PC-9 (cell line): ENCODE measurements at regions of chr6 and their contacts with region 1.

Region 1: DNA sequence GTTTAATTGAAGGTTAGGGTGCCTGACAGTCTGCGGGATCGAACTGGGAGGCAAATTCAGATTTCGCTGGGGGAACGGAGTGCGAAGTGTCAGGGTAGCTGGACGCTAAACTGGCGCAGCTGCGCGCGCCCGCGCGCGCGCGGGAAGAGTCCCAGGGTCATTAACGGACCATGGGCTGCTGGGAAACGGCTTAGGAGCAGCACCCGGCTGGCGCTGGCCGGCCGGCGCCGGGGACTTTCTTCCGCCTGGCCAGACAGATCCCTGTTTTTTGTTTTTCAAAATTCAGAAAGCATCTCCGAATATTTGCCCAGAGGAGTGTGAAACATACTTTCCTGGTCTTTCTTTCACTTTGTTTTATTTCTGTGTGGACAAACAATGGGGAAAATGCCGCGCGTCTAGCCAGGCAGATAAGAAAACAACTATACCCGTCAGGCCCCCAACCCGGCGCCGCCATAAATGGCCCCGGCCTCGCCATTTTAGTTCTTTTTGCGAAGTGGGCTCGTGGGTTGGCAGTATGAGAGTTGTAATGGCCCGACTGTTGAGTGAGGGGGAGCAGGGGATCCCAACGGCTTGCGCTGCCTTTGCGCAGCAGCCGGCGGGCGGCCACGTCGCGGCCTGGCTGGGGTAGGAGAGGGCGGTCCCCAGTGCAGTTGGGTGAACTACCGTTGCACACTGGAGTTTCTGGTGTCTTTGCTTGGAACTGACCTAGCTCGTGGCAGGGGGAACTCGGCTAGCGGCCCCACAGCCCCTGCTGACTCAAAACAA is 7.1 kb downstream of the HSPA1B start:
- DNase-seq: peak; percentile 71 to 80
- H3K4me3 ChIP-seq: peak overlapping the region; percentile 94
- H3K27ac ChIP-seq: peak overlapping the region; percentile 77
- H3K4me1 ChIP-seq: peaks cover 38% of the 10 kb centered on the region
- H3K27me3 ChIP-seq: no peaks in the 10 kb centered on the region
- CTCF ChIP-seq: no peak

Region 2: GRCh38 chr6:31007694-31008093 is 826.9 kb before region 1 on chr6:
- CTCF ChIA-PET with region 1: no interaction called
- POLR2A ChIA-PET with region 1: no interaction called
- intact Hi-C with region 1: no loop called
- DNase-seq: peak; percentile 58 to 97
- H3K4me3 ChIP-seq: no peak overlapping the region
- H3K27ac ChIP-seq: peak overlapping the region; percentile 75
- H3K4me1 ChIP-seq: peaks cover 67% of the 10 kb centered on the region
- H3K27me3 ChIP-seq: no peaks in the 10 kb centered on the region
- CTCF ChIP-seq: no peak

Region 3: GRCh38 chr6:31652925-31653718 is 181.5 kb before region 1 on chr6:
- CTCF ChIA-PET with region 1: no interaction called
- POLR2A ChIA-PET with region 1: no interaction called
- intact Hi-C with region 1: no loop called
- DNase-seq: peak in 1 of 2 experiments; percentile 86
- H3K4me3 ChIP-seq: peak overlapping the region; percentile 79
- H3K27ac ChIP-seq: peak overlapping the region; percentile 92
- H3K4me1 ChIP-seq: peaks cover 14% of the 10 kb centered on the region
- H3K27me3 ChIP-seq: no peaks in the 10 kb centered on the region
- CTCF ChIP-seq: no peak; the same call in 1 of the 2 replicates

Region 4: DNA sequence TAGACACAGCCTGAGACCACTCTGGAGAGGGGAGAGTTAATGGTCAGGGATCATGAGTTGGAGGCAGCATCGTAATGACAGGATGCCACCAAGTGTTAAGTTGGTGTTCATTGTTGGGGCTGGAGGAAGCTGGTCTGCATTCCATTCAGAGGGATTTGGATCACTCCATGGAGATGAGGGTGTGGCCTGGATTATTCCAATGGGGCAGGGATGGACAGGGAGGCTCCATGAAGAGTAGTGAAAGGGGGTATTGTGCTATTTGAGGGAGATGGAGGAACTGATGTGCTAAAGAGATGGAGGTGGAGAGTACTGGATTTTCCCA is 71.0 kb before region 1 on chr6:
- CTCF ChIA-PET with region 1: no interaction called
- POLR2A ChIA-PET with region 1: no interaction called
- intact Hi-C with region 1: no loop called
- DNase-seq: no peak
- H3K4me3 ChIP-seq: no peak overlapping the region
- H3K27ac ChIP-seq: no peak overlapping the region
- H3K4me1 ChIP-seq: peaks cover 5% of the 10 kb centered on the region; the same call in 1 of the 2 replicates
- H3K27me3 ChIP-seq: no peaks in the 10 kb centered on the region
- CTCF ChIP-seq: no peak

Region 5: GRCh38 chr6:31780507-31781243 is 53.9 kb before region 1 on chr6:
- CTCF ChIA-PET with region 1: no interaction called
- POLR2A ChIA-PET with region 1: no interaction called
- intact Hi-C with region 1: no loop called
- DNase-seq: no peak
- H3K4me3 ChIP-seq: no peak overlapping the region
- H3K27ac ChIP-seq: no peak overlapping the region
- H3K4me1 ChIP-seq: peaks cover 21% of the 10 kb centered on the region
- H3K27me3 ChIP-seq: no peaks in the 10 kb centered on the region
- CTCF ChIP-seq: no peak

Region 6: DNA sequence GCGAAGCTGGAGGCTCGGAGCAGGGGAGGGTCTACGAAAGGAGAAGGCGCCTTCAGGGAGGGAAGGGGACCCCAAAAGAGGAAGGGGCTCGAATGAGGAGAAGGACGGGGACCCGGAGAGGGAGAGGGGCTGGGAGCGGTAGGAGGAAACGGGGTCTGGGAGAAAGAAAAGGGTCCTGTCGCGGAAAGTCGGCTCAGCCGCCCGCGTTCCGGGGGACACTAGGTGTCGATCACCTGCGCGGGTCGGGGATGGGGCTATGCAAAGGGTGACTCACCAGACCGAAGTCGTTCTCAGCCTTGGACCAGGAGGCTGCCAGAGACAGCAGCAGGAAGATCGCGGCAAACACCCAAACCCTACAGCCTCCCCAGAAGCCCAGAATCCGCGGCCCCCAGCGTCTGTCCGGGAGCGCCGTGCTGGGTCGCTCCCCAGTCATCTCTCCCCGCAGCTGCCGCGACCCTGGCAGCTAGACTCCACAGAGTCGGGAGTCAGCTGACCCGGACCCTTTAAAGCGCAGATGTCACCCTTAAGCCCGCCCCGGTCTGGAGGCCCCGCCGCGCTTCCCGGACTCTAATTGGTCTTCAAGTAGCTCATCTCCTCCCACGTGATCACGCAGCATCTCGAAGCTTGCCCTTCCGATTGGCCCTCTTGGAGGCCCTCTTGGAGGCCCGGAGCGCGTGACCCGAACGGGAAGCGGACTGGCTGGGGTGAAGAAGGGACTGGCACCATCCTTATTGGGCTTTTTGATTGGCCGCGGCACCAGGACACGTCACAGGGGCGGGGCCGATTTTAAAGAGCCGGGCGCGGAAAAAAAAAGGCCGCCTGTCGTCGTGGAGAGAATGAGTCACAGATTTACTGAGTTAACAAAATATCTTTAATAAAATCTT is 28.0 kb after region 1 on chr6 and contains the start of gene NEU1:
- CTCF ChIA-PET with region 1: interaction called, 6 read pairs
- POLR2A ChIA-PET with region 1: no interaction called
- intact Hi-C with region 1: loop called (anchors 1 kb)
- DNase-seq: peak; percentile 99 to 100
- H3K4me3 ChIP-seq: peak within 1 kb of the TSS; percentile 65
- H3K27ac ChIP-seq: peak within 1 kb of the TSS; percentile 70
- H3K4me1 ChIP-seq: peaks cover 23% of the 10 kb centered on the region
- H3K27me3 ChIP-seq: no peaks in the 10 kb centered on the region
- CTCF ChIP-seq: no peak
- total RNA-seq, gene NEU1: 23.1 and 23.4 TPM in 2 replicates

Region 7: GRCh38 chr6:31877651-31878161 is 43.1 kb after region 1 on chr6:
- CTCF ChIA-PET with region 1: no interaction called
- POLR2A ChIA-PET with region 1: no interaction called
- intact Hi-C with region 1: loop called (anchors 5 kb)
- DNase-seq: peak; percentile 56 to 61
- H3K4me3 ChIP-seq: no peak overlapping the region
- H3K27ac ChIP-seq: no peak overlapping the region
- H3K4me1 ChIP-seq: peaks cover 35% of the 10 kb centered on the region
- H3K27me3 ChIP-seq: no peaks in the 10 kb centered on the region
- CTCF ChIP-seq: no peak

Region 8: DNA sequence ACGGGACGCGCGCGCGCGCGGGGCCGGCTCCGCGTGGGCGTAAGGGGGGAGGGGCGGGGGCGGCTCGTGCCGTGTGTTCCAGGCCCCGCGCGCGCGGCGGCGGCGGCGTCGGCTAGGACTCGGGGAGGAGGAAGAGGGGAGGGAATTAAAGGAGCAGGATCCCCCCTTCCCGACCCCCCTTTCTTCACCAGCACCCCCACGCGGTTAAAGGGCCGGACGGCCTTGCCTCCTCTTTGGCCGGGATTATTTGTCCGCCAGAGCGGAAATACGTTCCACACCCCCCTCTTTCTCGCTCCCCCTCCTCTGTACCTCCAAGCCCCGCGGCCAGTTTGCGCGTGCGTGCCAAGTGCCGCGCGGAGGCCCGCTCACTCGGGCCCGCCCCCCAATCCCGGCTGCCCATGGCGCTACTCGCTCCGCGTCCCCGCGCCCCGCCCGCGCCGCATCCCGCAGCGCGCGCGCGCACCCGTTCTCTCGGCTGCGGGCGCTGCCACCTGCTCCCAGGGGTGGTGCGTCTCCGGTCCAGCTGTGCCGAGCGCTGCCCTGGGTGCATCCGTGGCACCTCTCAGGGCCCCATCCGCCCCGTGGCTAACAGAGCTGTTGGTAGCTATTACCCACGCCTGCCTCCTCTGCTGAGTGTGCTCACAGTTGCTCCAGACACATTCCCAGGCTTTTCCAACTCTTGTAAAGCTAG is 67.5 kb after region 1 on chr6 and contains the start of gene ZBTB12:
- CTCF ChIA-PET with region 1: interaction called, 4 read pairs
- POLR2A ChIA-PET with region 1: no interaction called
- intact Hi-C with region 1: loop called (anchors 5 kb)
- DNase-seq: peak; percentile 76 to 95
- H3K4me3 ChIP-seq: peak within 1 kb of the TSS; percentile 65
- H3K27ac ChIP-seq: peak within 1 kb of the TSS; percentile 18; the same call in 1 of the 2 replicates
- H3K4me1 ChIP-seq: peaks cover 23% of the 10 kb centered on the region
- H3K27me3 ChIP-seq: no peaks in the 10 kb centered on the region
- CTCF ChIP-seq: no peak
- total RNA-seq, gene ZBTB12: 16.2 and 20.3 TPM in 2 replicates

Region 9: GRCh38 chr6:31952140-31952805 is 117.7 kb after region 1 on chr6:
- CTCF ChIA-PET with region 1: no interaction called
- POLR2A ChIA-PET with region 1: no interaction called
- intact Hi-C with region 1: loop called (anchors 5 kb)
- DNase-seq: peak; percentile 36 to 67
- H3K4me3 ChIP-seq: no peak overlapping the region
- H3K27ac ChIP-seq: no peak overlapping the region; the same call in 1 of the 2 replicates
- H3K4me1 ChIP-seq: peaks cover 24% of the 10 kb centered on the region
- H3K27me3 ChIP-seq: no peaks in the 10 kb centered on the region
- CTCF ChIP-seq: peak; percentile 84